ENCODE measurements at regions of chr2 and their contacts with region 1.

Region 1: GRCh38 chr2:37877457-37878315 is 47.4 kb upstream of the RMDN2 start:
- DNase-seq: no peak
- H3K4me3 ChIP-seq: no peak overlapping the region
- H3K27ac ChIP-seq: no peak overlapping the region
- H3K4me1 ChIP-seq: no peaks in the 10 kb centered on the region
- H3K27me3 ChIP-seq: no peaks in the 10 kb centered on the region
- CTCF ChIP-seq: peak; percentile 42 to 77 (median 59)
- POLR2A ChIP-seq: no peak

Region 2: GRCh38 chr2:37394796-37395555 is 482.7 kb before region 1 on chr2:
- intact Hi-C with region 1: loop called (anchors 5 kb)
- DNase-seq: no peak
- H3K4me3 ChIP-seq: no peak overlapping the region
- H3K27ac ChIP-seq: no peak overlapping the region
- H3K4me1 ChIP-seq: peaks cover 2% of the 10 kb centered on the region
- H3K27me3 ChIP-seq: no peaks in the 10 kb centered on the region
- CTCF ChIP-seq: no peak
- POLR2A ChIP-seq: no peak

Region 3: GRCh38 chr2:37966326-37966725 is 88.6 kb after region 1 on chr2:
- intact Hi-C with region 1: no loop called
- DNase-seq: no peak
- H3K4me3 ChIP-seq: no peak overlapping the region
- H3K27ac ChIP-seq: no peak overlapping the region
- H3K4me1 ChIP-seq: no peaks in the 10 kb centered on the region
- H3K27me3 ChIP-seq: no peaks in the 10 kb centered on the region
- CTCF ChIP-seq: no peak
- POLR2A ChIP-seq: no peak

Measured in vagina (tissue), 2 donors.